AG04449 (cell line): ENCODE measurements at regions of chr6 and their contacts with region 1.

Region 1: GRCh38 chr6:31597006-31597405 is 4.2 kb upstream of the NCR3 start:
- DNase-seq: no peak
- H3K4me3 ChIP-seq: no peak overlapping the region
- CTCF ChIP-seq: peak; percentile 44

Region 2: GRCh38 chr6:31493875-31494694 is 102.9 kb before region 1 on chr6:
- CTCF ChIA-PET with region 1: interaction called, 99 read pairs
- POLR2A ChIA-PET with region 1: no interaction called
- DNase-seq: no peak
- H3K4me3 ChIP-seq: peak overlapping the region; percentile 70
- CTCF ChIP-seq: peak; percentile 86

Region 3: GRCh38 chr6:31529329-31530150 is 67.5 kb before region 1 on chr6:
- CTCF ChIA-PET with region 1: interaction called, 1,569 read pairs
- POLR2A ChIA-PET with region 1: no interaction called
- DNase-seq: no peak
- H3K4me3 ChIP-seq: no peak overlapping the region
- CTCF ChIP-seq: no peak

Region 4: DNA sequence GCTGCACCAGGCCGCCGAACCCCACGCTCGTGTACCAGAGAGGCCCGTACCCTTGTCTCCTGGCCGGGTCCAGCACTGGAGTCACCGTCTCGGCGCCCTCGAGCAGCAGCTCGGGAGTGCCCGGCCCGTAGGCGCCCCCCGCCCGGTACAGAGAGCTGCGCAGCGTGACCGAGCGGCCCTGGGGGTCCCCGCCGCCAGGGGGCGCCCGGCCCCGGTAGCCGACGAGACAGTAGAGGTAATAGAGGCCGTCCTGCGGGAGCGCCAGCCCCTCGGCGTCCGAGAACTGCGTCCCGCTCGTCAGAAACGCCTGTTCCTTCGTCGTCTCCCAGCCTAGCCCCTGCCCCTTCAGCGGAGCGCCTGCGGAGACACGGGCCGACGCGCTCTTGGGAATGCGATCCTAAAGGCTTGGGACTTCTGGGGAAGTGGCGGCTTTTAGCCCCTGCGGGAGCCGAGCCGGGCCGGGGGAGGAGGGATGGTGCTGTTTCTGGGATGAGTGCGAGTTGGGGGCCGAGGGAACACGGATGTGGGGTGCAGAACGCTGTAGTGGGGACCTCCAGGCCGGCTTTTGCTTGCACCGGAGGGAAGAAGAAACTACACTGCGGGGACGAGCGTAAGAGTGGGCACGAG is 16.1 kb before region 1 on chr6:
- CTCF ChIA-PET with region 1: interaction called, 459 read pairs
- POLR2A ChIA-PET with region 1: interaction called, 4 read pairs
- DNase-seq: no peak
- H3K4me3 ChIP-seq: peak overlapping the region; percentile 89
- CTCF ChIP-seq: peak; percentile 93

Region 5: GRCh38 chr6:31615748-31616147 is 18.7 kb after region 1 on chr6:
- CTCF ChIA-PET with region 1: interaction called, 148 read pairs
- POLR2A ChIA-PET with region 1: no interaction called
- DNase-seq: no peak
- H3K4me3 ChIP-seq: no peak overlapping the region
- CTCF ChIP-seq: no peak

Region 6: GRCh38 chr6:31652925-31653718 is 56.1 kb after region 1 on chr6:
- CTCF ChIA-PET with region 1: interaction called, 11 read pairs
- POLR2A ChIA-PET with region 1: no interaction called
- DNase-seq: no peak
- H3K4me3 ChIP-seq: peak overlapping the region; percentile 91
- CTCF ChIP-seq: no peak

Region 7: GRCh38 chr6:31882344-31882743 is 285.3 kb after region 1 on chr6:
- CTCF ChIA-PET with region 1: no interaction called
- POLR2A ChIA-PET with region 1: no interaction called
- DNase-seq: no peak
- H3K4me3 ChIP-seq: no peak overlapping the region
- CTCF ChIP-seq: no peak